Right cardiac atrium (tissue), 5 donors: ENCODE measurements at regions of chr15 and their contacts with region 1.

Region 1: GRCh38 chr15:28043691-28044091 is 55.4 kb downstream of the OCA2 start:
- DNase-seq: no peak
- ATAC-seq: no peak
- H3K4me3 ChIP-seq: no peak overlapping the region
- H3K27ac ChIP-seq: no peak overlapping the region
- H3K4me1 ChIP-seq: no peaks in the 10 kb centered on the region
- H3K27me3 ChIP-seq: no peaks in the 10 kb centered on the region

Region 2: DNA sequence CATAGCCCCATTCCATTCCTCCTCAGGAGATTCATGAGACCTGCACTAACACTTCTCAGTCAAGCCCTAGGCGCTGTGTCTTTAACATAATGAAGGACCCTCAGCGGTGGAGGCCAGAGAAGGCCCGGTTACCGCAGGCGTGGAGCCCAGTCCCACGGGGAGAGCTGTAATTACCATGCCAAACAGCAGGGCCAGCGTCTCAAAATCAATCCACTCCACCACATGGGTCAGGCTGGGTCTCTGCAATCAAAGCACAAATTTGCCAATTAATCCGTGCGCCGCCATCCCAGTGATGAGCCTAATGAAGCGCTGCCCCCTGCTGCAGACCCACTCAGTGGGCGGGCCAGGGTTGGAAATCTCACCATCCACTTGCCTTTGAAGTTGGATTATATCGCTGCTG is 54.3 kb before region 1 on chr15:
- intact Hi-C with region 1: loop called in 1 of 4 experiments (anchors 10 kb)
- DNase-seq: no peak
- ATAC-seq: no peak
- H3K4me3 ChIP-seq: no peak overlapping the region
- H3K27ac ChIP-seq: no peak overlapping the region
- H3K4me1 ChIP-seq: no peaks in the 10 kb centered on the region
- H3K27me3 ChIP-seq: no peaks in the 10 kb centered on the region

Region 3: DNA sequence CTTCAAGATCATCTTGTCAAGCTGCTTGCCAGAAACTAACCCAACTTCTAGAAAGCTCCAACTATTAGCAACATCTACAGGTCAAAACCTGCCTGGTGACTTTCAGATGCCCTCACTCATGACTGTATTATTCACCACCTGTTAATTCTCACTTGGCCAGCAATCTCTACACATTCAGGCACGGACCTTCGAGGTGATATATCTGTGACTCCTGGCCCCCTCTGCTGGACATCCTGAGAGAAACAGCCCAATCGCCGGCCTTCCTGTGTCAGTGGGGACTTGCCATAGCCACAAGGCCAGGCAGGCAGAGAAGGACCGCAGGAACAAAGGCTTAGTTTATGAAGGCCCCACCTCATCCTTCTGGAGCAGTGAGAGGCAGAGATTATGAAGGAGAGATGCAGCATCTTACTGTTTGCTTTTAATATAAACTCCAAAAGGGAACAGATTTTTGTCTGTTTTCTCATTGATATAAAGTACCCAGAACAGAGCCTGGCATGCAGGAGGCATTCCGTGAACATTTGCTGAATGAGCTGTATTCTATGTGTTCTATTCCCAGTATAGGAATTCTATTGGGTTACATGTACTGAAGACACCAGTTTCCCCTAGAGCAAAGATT is 79.8 kb after region 1 on chr15:
- intact Hi-C with region 1: no loop called
- DNase-seq: peak in 2 of 3 donors; percentile 50 to 85
- ATAC-seq: peak; percentile 55 to 63
- H3K4me3 ChIP-seq: no peak overlapping the region
- H3K27ac ChIP-seq: no peak overlapping the region
- H3K4me1 ChIP-seq: peaks cover 3% of the 10 kb centered on the region
- H3K27me3 ChIP-seq: no peaks in the 10 kb centered on the region